AG04449 (cell line): ENCODE measurements at regions of chr17 and their contacts with region 1.

Region 1: GRCh38 chr17:57892146-57892828 is 42.4 kb upstream of the MRPS23 start:
- DNase-seq: no peak
- H3K4me3 ChIP-seq: no peak overlapping the region; the same call in 1 of the 2 replicates
- CTCF ChIP-seq: peak; percentile 98

Region 2: GRCh38 chr17:57861000-57861789 is 31.1 kb before region 1 on chr17:
- CTCF ChIA-PET with region 1: interaction called, 11 read pairs
- POLR2A ChIA-PET with region 1: no interaction called
- DNase-seq: no peak
- H3K4me3 ChIP-seq: peak overlapping the region; percentile 12
- CTCF ChIP-seq: no peak

Region 3: GRCh38 chr17:57875309-57876115 is 16.8 kb before region 1 on chr17:
- CTCF ChIA-PET with region 1: interaction called, 128 read pairs
- POLR2A ChIA-PET with region 1: interaction called, 23 read pairs
- DNase-seq: peak; percentile 94
- H3K4me3 ChIP-seq: peak overlapping the region; percentile 31
- CTCF ChIP-seq: peak; percentile 60

Region 4: GRCh38 chr17:57920916-57921703 is 28.8 kb after region 1 on chr17:
- CTCF ChIA-PET with region 1: interaction called, 10 read pairs
- POLR2A ChIA-PET with region 1: interaction called, 3 read pairs
- DNase-seq: no peak
- H3K4me3 ChIP-seq: no peak overlapping the region
- CTCF ChIP-seq: no peak

Region 5: GRCh38 chr17:57982452-57983170 is 90.3 kb after region 1 on chr17:
- CTCF ChIA-PET with region 1: interaction called, 15 read pairs
- POLR2A ChIA-PET with region 1: no interaction called
- DNase-seq: no peak
- H3K4me3 ChIP-seq: no peak overlapping the region
- CTCF ChIP-seq: no peak

Region 6: GRCh38 chr17:57995076-57995956 is 103.0 kb after region 1 on chr17:
- CTCF ChIA-PET with region 1: interaction called, 47 read pairs
- POLR2A ChIA-PET with region 1: no interaction called
- DNase-seq: no peak
- H3K4me3 ChIP-seq: no peak overlapping the region
- CTCF ChIP-seq: peak; percentile 70